Transverse colon (tissue), 4 donors: ENCODE measurements at regions of chr22 and their contacts with region 1.

Region 1: GRCh38 chr22:32411829-32412592 is at the start of gene RTCB:
- DNase-seq: peak; percentile 94
- H3K4me3 ChIP-seq: peak within 1 kb of the TSS; percentile 73 to 92 (median 78)
- H3K27ac ChIP-seq: peak within 1 kb of the TSS; percentile 76 to 89 (median 85)
- H3K4me1 ChIP-seq: peaks cover 9 to 48% (median 16%) of the 10 kb centered on the region in 4 donors
- H3K27me3 ChIP-seq: no peaks in the 10 kb centered on the region
- CTCF ChIP-seq: peak in 1 of 5 experiments; percentile 13
- EP300 ChIP-seq: no peak
- POLR2A ChIP-seq: peak; percentile 77
- total RNA-seq, gene RTCB: 55.4 to 104 (median 84.0) TPM

Region 2: DNA sequence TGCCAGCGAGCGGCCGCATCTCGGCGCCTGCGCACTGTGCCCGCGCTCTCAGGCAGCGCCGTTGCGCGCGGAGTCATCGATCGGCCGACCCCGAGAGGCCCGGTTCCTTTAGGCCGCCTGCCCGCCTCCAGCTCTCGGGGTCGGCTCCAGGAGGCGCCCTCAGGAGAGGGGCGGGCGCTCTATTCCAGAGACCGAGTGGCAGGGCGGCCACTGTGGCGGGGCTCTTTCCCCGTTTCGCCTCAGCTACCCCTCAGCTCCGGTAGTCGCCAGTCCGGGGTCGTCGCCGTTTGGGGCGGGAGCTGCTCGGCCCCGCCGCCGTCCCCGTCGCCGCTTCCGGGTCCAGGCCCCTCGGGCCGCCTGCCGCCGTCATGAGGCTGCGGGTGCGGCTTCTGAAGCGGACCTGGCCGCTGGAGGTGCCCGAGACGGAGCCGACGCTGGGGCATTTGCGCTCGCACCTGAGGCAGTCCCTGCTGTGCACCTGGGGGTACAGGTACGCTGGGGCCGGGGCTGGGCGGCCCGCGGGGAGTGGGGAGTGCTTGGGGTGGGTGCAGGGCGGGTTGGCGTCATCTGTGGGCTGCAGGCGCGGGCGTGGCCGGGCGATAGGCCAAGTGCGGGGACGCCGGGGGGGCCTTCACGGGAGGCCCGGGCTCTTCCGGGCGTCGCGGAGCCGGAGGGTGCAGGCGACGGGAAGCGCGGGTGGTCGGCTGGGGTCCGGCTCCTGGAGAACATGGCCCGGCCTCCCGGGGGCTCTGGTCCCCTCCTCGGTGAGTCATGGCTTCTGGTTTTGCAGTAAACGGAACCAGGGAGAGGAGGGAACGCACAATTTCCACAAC is 62.8 kb after region 1 on chr22 and contains the start of gene FBXO7:
- in situ Hi-C with region 1: loop called in 1 of 4 experiments (anchors 10 kb)
- intact Hi-C with region 1: loop called (anchors 5 kb)
- DNase-seq: peak; percentile 93
- H3K4me3 ChIP-seq: peak within 1 kb of the TSS; percentile 67 to 95 (median 93)
- H3K27ac ChIP-seq: peak within 1 kb of the TSS; percentile 97 to 100 (median 98)
- H3K4me1 ChIP-seq: peaks cover 15 to 41% (median 29%) of the 10 kb centered on the region in 4 donors
- H3K27me3 ChIP-seq: no peaks in the 10 kb centered on the region
- CTCF ChIP-seq: peak in 4 of 5 experiments; percentile 17 to 53 (median 36)
- EP300 ChIP-seq: no peak
- POLR2A ChIP-seq: peak; percentile 91
- total RNA-seq, gene FBXO7: 70.3 to 80.1 (median 76.4) TPM